ENCODE measurements at regions of chr11 and their contacts with region 1.

Region 1: GRCh38 chr11:33542921-33543320 is 157.7 kb downstream of the C11orf91 start:
- DNase-seq: peak in 3 of 5 donors; percentile 36 to 44 (median 40)
- ATAC-seq: peak in 2 of 4 donors; percentile 46
- H3K4me3 ChIP-seq: no peak overlapping the region
- H3K27ac ChIP-seq: no peak overlapping the region
- H3K4me1 ChIP-seq: peaks cover 0 to 16% (median 2%) of the 10 kb centered on the region in 12 donors
- H3K27me3 ChIP-seq: peaks cover 0 to 3% (median 0%) of the 10 kb centered on the region in 9 donors
- CTCF ChIP-seq: peak; percentile 38 to 63 (median 56)
- POLR2A ChIP-seq: no peak

Region 2: DNA sequence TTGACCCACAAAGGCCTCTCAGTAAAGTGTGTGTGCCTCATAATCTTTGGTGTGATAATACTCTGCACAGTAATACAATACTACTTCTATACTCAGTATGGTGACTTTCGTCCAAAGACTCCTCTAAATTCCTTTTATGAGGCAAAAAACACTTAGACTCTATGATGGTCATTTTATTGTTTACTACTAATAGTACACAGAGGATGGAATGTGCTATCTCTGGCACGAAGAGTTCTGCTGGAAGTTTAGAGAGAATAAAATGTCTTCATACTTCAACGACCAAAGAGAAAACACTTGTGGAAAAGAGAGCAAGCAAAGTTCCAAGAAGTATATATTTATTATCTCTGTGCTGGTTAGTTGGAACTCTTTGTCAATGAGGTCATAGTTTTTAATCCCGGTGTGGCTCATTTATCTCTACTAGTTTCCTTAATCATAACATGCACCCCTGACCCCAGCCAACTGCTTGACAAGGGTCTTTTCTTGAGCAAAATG is 374.2 kb before region 1 on chr11:
- intact Hi-C with region 1: loop called in 2 of 10 experiments (anchors 5 kb)
- DNase-seq: no peak
- ATAC-seq: peak in 3 of 4 donors; percentile 28 to 52 (median 29)
- H3K4me3 ChIP-seq: no peak overlapping the region
- H3K27ac ChIP-seq: peak overlapping the region in 1 of 12 donors; percentile 33
- H3K4me1 ChIP-seq: peaks cover 0 to 20% (median 5%) of the 10 kb centered on the region in 12 donors
- H3K27me3 ChIP-seq: no peaks in the 10 kb centered on the region
- CTCF ChIP-seq: no peak
- POLR2A ChIP-seq: no peak

Region 3: GRCh38 chr11:33195462-33196173 is 347.3 kb before region 1 on chr11:
- intact Hi-C with region 1: no loop called
- DNase-seq: no peak
- ATAC-seq: peak in 1 of 4 donors; percentile 24
- H3K4me3 ChIP-seq: no peak overlapping the region
- H3K27ac ChIP-seq: peak overlapping the region in 2 of 12 donors; percentile 2 to 73
- H3K4me1 ChIP-seq: peaks cover 0 to 17% (median 0%) of the 10 kb centered on the region in 12 donors
- H3K27me3 ChIP-seq: no peaks in the 10 kb centered on the region
- CTCF ChIP-seq: no peak
- POLR2A ChIP-seq: no peak

Region 4: DNA sequence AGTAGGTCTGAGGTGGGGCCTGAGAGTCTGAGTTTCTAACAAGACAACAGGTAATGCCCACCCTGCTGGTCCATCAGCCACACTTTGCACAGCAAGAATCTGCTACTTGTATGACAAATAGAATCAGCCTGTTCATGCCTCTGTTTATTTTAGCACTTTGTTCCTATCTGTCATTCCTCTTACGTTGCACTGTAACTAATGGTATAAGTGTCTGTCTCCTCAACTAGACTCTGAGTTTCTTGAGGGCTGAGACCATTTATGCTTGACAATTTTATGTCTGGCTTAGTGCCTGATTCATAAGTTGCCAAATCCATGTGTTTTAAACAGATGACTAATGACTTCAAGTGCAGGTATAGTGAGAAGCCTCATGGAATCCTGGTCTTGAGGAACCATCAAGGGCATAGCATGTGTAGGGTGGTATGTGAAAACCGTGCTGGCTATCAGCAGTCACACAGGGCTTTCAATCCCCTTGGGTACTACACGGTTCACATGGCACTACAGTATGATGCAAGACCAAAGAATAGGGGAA is 52.0 kb before region 1 on chr11:
- intact Hi-C with region 1: no loop called
- DNase-seq: no peak
- ATAC-seq: no peak
- H3K4me3 ChIP-seq: no peak overlapping the region
- H3K27ac ChIP-seq: no peak overlapping the region
- H3K4me1 ChIP-seq: no peaks in the 10 kb centered on the region
- H3K27me3 ChIP-seq: peaks cover 0 to 9% (median 0%) of the 10 kb centered on the region in 9 donors
- CTCF ChIP-seq: no peak
- POLR2A ChIP-seq: no peak

Region 5: GRCh38 chr11:33620423-33621171 is 77.7 kb after region 1 on chr11:
- intact Hi-C with region 1: no loop called
- DNase-seq: no peak
- ATAC-seq: peak in 1 of 4 donors; percentile 28
- H3K4me3 ChIP-seq: no peak overlapping the region
- H3K27ac ChIP-seq: no peak overlapping the region
- H3K4me1 ChIP-seq: peaks cover 0 to 5% (median 0%) of the 10 kb centered on the region in 12 donors
- H3K27me3 ChIP-seq: no peaks in the 10 kb centered on the region
- CTCF ChIP-seq: no peak
- POLR2A ChIP-seq: no peak

Region 6: DNA sequence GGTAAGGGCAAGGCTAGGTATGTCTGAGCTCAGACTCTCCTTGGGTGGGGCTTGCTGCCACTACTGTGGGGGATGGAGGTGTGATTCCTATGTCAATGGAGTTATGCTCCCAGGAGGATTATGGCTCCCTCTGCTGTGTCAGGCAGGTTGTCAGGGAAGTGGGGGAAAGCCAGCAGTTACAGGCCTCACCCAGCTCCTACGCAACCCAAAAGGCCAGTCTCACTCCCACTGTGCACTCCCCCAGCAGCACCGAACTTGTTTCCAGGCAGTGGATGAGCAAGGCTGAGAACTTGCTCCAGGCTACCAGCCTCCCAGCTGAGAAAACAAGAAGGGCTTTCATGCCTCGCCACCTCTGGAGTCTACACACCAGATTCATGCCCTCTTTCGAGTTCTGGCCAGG is 139.5 kb after region 1 on chr11:
- intact Hi-C with region 1: loop called in 7 of 10 experiments (anchors 2 to 5 kb)
- DNase-seq: no peak
- ATAC-seq: no peak
- H3K4me3 ChIP-seq: no peak overlapping the region
- H3K27ac ChIP-seq: no peak overlapping the region
- H3K4me1 ChIP-seq: no peaks in the 10 kb centered on the region
- H3K27me3 ChIP-seq: peaks cover 0 to 7% (median 0%) of the 10 kb centered on the region in 9 donors
- CTCF ChIP-seq: no peak
- POLR2A ChIP-seq: no peak

Region 7: DNA sequence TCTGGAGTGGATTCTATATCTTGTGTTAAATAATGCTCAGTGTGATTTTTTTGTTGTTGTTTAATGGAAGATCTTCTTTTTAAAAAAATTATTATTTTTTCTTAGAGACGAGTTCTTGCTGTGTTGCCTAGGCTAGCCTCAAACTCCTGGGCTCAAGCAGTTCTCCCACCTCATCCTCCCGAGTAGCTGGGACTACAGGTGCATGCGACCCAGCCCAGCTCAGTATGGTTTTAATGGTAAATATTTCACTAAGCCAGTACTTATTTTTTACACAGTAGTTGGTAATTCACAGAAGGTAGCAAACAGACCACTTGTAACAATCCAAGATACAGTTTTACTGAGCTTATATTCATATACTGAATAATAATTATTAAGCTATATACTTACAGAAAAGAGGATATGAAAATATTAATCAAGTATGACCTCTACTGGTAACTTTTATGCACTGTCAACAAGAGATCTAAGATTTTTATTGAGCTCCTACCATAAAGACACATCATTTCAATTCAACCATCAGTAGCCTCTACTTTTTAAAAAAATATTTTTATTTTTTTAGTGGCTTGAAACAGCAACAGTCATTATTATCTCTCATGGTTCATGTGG is 199.4 kb after region 1 on chr11:
- intact Hi-C with region 1: loop called in 8 of 10 experiments (anchors 2 to 10 kb)
- DNase-seq: no peak
- ATAC-seq: peak in 3 of 4 donors; percentile 14 to 49 (median 39)
- H3K4me3 ChIP-seq: no peak overlapping the region
- H3K27ac ChIP-seq: peak overlapping the region in 2 of 12 donors; percentile 1 to 58
- H3K4me1 ChIP-seq: peaks cover 0 to 30% (median 10%) of the 10 kb centered on the region in 12 donors
- H3K27me3 ChIP-seq: no peaks in the 10 kb centered on the region
- CTCF ChIP-seq: peak; percentile 32 to 76 (median 60)
- POLR2A ChIP-seq: no peak

Region 8: DNA sequence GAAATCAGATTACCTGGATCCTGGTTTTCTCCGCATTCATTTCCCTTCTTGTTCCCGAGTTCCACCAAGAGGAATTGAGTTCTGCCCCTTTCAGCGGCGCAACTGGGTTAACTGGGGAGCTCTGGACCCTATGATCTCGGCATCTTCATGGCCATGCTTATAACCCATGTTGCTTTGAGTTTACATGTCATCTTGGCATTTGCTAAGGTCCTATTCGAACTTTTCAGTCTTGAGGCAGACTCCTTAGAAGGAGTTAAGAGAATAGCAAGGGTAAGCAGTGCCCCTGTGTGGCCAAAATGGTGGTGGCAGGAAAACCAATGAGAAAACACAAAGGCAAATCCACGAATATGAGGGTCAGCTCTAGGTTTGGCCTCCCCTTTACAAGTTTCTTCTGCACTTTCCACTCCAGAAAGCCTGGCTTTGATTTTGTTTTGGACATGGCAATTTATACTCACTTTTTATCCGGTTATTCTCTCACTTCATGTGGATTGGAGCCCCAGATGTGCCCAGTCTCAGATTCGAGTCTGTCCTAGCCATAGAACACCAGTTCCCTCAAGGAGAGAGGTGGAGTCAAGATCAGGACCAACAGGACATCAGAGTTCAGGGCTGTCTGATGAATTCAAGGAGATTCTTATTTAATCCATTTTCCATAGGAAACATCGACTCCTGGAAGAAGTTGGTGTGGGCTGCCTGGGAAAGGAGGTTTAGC is 286.7 kb after region 1 on chr11:
- intact Hi-C with region 1: loop called in 1 of 10 experiments (anchors 10 kb)
- DNase-seq: peak in 4 of 5 donors; percentile 35 to 52 (median 46)
- ATAC-seq: peak in 3 of 4 donors; percentile 82 to 91 (median 86)
- H3K4me3 ChIP-seq: peak overlapping the region; percentile 21 to 58 (median 49)
- H3K27ac ChIP-seq: no peak overlapping the region
- H3K4me1 ChIP-seq: peaks cover 3 to 10% (median 7%) of the 10 kb centered on the region in 12 donors
- H3K27me3 ChIP-seq: peaks cover 0 to 49% (median 11%) of the 10 kb centered on the region in 9 donors
- CTCF ChIP-seq: peak; percentile 56 to 85 (median 76)
- POLR2A ChIP-seq: no peak